Right ventricle myocardium inferior (tissue), 1 donor: ENCODE measurements at regions of chr5 and their contacts with region 1.

Region 1: GRCh38 chr5:42423285-42424165 is at the start of gene GHR:
- DNase-seq: peak; percentile 87
- ATAC-seq: peak; percentile 94
- total RNA-seq, gene GHR: 14.7 TPM

Region 2: GRCh38 chr5:41869739-41870626 is 553.5 kb before region 1 on chr5 and contains the start of gene OXCT1:
- intact Hi-C with region 1: loop called (anchors 10 kb)
- DNase-seq: peak; percentile 94
- ATAC-seq: peak; percentile 82
- total RNA-seq, gene OXCT1: 128 TPM

Region 3: GRCh38 chr5:42301349-42301748 is 122.2 kb before region 1 on chr5:
- intact Hi-C with region 1: no loop called
- DNase-seq: no peak
- ATAC-seq: no peak

Region 4: GRCh38 chr5:42522783-42523182 is 99.3 kb after region 1 on chr5:
- intact Hi-C with region 1: no loop called
- DNase-seq: no peak
- ATAC-seq: no peak

Region 5: GRCh38 chr5:42566652-42567295 is 143.2 kb after region 1 on chr5:
- intact Hi-C with region 1: loop called (anchors 5 kb)
- DNase-seq: no peak
- ATAC-seq: peak; percentile 70

Region 6: DNA sequence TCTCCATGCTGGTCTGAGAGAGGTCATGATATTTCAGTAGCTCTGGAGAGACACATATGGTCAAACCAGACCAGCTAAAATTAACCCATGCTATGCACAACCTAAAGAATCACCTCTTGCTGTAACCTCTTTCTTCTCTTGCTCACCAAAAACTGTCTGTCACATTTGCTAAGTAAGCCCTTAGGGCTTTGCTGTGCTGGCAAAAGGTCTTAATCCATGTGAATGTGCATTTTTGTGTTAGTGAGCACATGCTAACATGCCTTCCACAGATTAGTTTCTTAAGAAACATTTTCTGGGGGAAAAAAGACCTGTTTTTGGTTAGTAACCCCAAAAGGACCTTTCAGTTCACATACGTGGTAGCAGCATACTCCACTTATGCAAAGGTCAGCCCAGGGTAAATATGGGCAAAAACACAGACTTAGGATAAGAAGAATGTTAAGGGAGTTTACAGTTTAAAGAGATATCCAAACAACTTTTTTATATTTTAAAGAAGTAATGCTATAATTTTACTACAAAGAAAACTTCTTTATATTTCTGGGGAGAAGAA is 208.9 kb after region 1 on chr5:
- intact Hi-C with region 1: no loop called
- DNase-seq: no peak
- ATAC-seq: no peak

Region 7: DNA sequence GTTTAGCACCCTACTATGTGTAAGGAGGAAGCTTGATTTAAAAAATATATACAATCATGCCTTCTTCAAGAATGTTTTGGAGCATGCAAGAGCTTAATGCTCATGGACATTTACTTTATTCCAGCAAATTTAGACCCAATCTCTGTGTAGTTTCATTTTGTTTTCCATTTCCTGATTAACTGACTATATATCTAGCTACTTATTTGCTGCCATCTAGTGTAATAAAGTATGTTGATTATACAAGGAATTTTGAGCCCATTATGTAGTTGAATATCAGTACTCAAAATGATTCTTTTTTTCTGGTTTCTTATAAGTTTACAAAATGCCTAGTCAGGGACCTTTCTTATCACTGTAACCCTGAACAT is 233.1 kb after region 1 on chr5:
- intact Hi-C with region 1: loop called (anchors 2 kb)
- DNase-seq: no peak
- ATAC-seq: peak; percentile 50

Region 8: DNA sequence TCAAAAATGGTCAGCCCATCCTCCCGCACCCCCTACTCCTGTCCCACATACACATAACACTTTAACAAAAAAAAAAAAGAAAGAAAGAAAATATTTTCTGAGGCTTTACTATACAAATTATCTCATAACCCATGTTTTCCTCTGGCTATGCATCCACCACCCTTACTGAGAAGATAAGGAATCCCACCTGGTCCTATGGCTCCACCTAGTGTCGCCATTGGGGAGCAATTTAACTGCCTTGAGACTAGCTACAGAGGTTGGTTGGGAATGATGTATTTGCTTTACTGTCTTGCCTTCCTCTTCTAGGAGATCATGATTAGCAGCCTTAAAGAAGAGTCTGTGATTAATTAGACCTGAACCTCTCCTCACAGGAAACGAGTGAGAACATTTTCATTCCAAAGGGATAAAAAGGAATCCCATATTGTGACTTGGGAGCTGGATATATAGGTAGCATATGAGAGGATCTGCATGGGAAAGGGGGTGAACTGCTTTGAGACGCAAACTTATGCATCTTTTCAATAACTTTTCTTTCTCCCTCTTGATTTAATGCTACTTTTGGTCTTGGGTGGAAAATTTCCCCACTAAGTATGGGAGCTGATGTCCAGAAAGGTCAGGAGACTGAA is 465.9 kb after region 1 on chr5:
- intact Hi-C with region 1: loop called (anchors 10 kb)
- DNase-seq: no peak
- ATAC-seq: peak; percentile 88

Region 9: DNA sequence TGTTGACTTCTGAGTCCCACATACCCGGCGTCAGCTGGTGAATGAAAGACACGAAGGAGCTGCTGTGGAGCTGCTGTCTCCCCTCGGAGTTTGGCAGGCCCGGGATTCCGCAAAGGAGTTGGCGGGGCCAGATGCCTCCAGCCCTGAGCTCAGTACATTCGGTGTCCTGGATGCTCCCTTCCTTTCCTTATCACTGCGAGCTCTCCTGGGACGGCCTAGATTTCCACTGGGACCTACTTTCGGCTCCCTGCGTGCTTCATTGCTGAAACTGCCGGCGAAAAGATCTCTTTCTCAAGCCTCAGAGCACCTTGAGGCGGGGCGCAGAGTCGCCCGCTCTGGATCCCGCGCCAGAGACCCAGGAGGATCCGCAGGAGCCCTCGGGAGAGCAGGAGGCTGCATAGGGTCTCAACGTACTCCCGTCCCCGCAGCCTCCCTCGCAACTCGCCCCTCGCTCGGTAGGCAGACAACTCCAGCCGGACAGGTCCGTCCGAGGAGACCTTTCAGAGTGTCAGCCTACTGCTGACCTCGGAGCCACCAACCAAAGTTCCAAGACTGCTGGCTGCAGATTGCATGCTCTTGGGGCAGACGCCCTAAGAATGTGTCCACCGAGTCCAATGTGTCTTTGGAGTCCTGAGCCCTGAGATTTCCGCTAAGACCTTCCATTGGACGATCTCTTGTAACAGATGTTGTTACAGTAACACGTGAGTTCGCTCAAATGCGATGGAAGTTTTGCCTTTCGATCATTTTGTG is 610.5 kb after region 1 on chr5:
- intact Hi-C with region 1: no loop called
- DNase-seq: no peak
- ATAC-seq: no peak